ENCODE measurements at regions of chr18 and their contacts with region 1.

Region 1: GRCh38 chr18:37207343-37207742 is 358.3 kb downstream of the CELF4 start:
- DNase-seq: no peak
- H3K4me3 ChIP-seq: no peak overlapping the region
- H3K27ac ChIP-seq: no peak overlapping the region
- H3K4me1 ChIP-seq: no peaks in the 10 kb centered on the region
- H3K27me3 ChIP-seq: no peaks in the 10 kb centered on the region
- CTCF ChIP-seq: no peak
- POLR2A ChIP-seq: no peak

Region 2: GRCh38 chr18:37138456-37138855 is 68.9 kb before region 1 on chr18:
- intact Hi-C with region 1: no loop called
- DNase-seq: no peak
- H3K4me3 ChIP-seq: no peak overlapping the region
- H3K27ac ChIP-seq: no peak overlapping the region
- H3K4me1 ChIP-seq: no peaks in the 10 kb centered on the region
- H3K27me3 ChIP-seq: no peaks in the 10 kb centered on the region
- CTCF ChIP-seq: no peak
- POLR2A ChIP-seq: no peak

Region 3: DNA sequence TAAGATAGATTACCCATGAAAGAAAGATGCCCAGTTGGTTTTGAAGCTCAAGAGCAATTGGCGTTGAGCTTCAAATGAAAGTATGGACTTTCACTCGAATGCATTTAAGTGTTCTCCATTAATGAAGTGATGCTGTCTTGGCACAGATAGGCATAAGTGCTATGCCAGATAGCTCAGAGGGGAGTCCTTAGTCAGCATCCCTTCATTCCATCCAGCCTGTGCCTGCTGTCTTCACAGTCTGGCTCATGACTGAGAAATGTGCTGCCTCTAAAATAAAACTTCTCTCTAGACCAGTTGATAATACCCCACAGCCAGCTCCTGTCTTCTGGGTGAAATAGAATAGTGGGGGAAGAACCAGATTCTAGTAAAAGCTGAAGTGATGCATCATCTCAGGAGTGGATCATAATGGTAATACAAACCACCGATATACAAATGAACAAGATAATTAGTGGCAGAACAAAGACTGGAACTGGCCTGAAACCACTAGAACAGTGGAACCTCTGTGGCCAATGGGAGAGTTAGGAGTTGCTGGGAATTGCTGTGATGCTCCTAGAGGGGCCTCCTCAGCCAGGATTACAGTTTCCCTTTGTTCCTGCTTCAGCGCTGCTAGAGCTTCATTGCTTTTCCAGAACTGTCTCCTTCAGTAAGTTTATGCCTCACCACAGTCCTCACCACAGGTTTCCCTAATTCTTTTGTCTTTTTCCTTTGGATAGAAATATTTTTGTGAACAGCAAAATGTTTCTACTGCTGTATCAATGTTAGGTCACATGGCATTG is 19.1 kb before region 1 on chr18:
- intact Hi-C with region 1: loop called in 1 of 2 experiments (anchors 1 kb)
- DNase-seq: no peak
- H3K4me3 ChIP-seq: no peak overlapping the region
- H3K27ac ChIP-seq: no peak overlapping the region
- H3K4me1 ChIP-seq: no peaks in the 10 kb centered on the region
- H3K27me3 ChIP-seq: no peaks in the 10 kb centered on the region
- CTCF ChIP-seq: no peak
- POLR2A ChIP-seq: no peak

Measured in adrenal gland (tissue), 19 donors.